A549 (cell line): ENCODE measurements at regions of chr11 and their contacts with region 1.

Region 1: DNA sequence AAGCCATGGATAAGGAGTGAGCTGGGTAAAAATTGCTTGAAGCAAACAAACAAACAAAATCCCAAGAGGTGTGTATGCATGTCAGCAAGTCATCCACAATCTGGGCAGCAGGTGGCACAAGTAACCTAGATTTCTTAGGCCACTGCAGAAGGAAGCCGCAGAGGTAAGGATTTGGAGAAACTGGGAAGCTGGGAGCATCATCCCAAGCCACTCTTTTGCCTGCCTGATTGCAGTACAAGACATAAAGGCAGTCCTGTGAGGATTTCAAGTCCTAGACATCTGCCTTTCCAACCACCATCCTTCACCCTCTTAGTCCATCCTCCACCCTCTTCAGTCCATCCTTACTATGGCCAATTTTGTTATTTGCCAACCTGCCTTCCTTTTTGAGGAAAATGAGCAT is 67.2 kb upstream of the BMAL1 start:
- DNase-seq: peak; percentile 72 to 88
- ATAC-seq: peak; percentile 85 to 90
- H3K4me3 ChIP-seq: no peak overlapping the region
- H3K27ac ChIP-seq: peak overlapping the region; percentile 6 to 64; a peak in 3 of 6 replicates
- H3K4me1 ChIP-seq: peaks cover 35% of the 10 kb centered on the region
- CTCF ChIP-seq: peak; percentile 95
- EP300 ChIP-seq: no peak
- POLR2A ChIP-seq: no peak
- RAD21 ChIP-seq: peak; percentile 99

Region 2: DNA sequence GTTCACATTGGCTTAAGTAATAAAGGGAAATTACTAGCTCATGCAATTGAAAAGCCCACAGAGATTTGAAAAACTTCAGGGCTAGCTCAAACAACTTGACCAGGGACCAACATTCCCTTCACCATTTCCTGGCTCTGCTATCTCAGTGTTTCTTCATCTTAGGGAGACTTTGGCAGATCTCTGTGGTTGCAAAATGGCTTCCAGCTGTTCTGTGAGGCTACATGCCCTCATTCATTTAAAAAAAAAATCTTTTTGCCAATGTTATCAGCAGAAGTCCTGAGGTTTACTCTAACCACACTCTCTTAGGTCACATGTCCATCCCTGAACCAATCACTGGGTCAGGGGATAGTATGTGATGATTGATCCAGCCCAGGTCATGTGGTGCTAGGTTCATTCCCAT is 215.2 kb before region 1 on chr11:
- CTCF ChIA-PET with region 1: no interaction called
- POLR2A ChIA-PET with region 1: no interaction called
- DNase-seq: no peak
- ATAC-seq: no peak
- H3K4me3 ChIP-seq: no peak overlapping the region
- H3K27ac ChIP-seq: no peak overlapping the region
- H3K4me1 ChIP-seq: no peaks in the 10 kb centered on the region
- CTCF ChIP-seq: no peak
- EP300 ChIP-seq: no peak
- POLR2A ChIP-seq: no peak
- RAD21 ChIP-seq: no peak

Region 3: GRCh38 chr11:13073119-13073981 is 137.1 kb before region 1 on chr11:
- CTCF ChIA-PET with region 1: no interaction called
- POLR2A ChIA-PET with region 1: no interaction called
- DNase-seq: peak; percentile 88 to 91
- ATAC-seq: peak; percentile 96 to 97
- H3K4me3 ChIP-seq: no peak overlapping the region
- H3K27ac ChIP-seq: peak overlapping the region; percentile 86 to 87
- H3K4me1 ChIP-seq: peaks cover 38% of the 10 kb centered on the region
- CTCF ChIP-seq: no peak
- EP300 ChIP-seq: peak; percentile 28 to 80; a peak in 2 of 5 replicates
- POLR2A ChIP-seq: no peak
- RAD21 ChIP-seq: peak in 1 of 2 experiments; percentile 30; a peak in 2 of 5 replicates

Region 4: DNA sequence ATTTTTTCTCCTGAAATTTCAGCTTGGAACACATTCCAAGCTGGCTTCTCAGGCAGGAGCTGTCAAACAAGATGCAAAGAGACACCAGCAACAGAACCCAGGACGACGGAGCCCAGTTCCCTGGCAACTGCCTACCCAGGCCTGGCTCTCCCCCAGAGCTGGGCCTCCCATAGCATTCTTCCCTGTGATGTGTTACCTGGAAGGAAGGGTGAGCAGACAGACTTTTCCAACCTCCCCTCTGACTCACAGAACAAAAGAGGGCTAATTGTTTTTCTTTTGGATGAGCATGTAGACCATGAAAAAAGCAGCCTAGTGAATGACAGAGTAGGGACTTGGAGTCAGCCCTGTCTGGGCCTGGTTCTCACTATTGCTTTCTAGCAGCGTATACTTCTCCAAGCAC is 11.9 kb after region 1 on chr11:
- CTCF ChIA-PET with region 1: interaction called, 44 read pairs
- POLR2A ChIA-PET with region 1: no interaction called
- DNase-seq: no peak
- ATAC-seq: peak in 1 of 2 experiments; percentile 37; a peak in 3 of 6 replicates
- H3K4me3 ChIP-seq: no peak overlapping the region
- H3K27ac ChIP-seq: peak overlapping the region in 1 of 2 experiments; percentile 63; a peak in 2 of 6 replicates
- H3K4me1 ChIP-seq: peaks cover 16% of the 10 kb centered on the region
- CTCF ChIP-seq: no peak
- EP300 ChIP-seq: no peak
- POLR2A ChIP-seq: no peak
- RAD21 ChIP-seq: no peak

Region 5: GRCh38 chr11:13249996-13250395 is 39.6 kb after region 1 on chr11:
- CTCF ChIA-PET with region 1: interaction called, 36 read pairs
- POLR2A ChIA-PET with region 1: no interaction called
- DNase-seq: peak in 1 of 2 experiments; percentile 27
- ATAC-seq: peak; percentile 75 to 82
- H3K4me3 ChIP-seq: no peak overlapping the region
- H3K27ac ChIP-seq: no peak overlapping the region
- H3K4me1 ChIP-seq: peaks cover 6% of the 10 kb centered on the region
- CTCF ChIP-seq: peak; percentile 52
- EP300 ChIP-seq: no peak
- POLR2A ChIP-seq: no peak
- RAD21 ChIP-seq: peak; percentile 66 to 70

Region 6: DNA sequence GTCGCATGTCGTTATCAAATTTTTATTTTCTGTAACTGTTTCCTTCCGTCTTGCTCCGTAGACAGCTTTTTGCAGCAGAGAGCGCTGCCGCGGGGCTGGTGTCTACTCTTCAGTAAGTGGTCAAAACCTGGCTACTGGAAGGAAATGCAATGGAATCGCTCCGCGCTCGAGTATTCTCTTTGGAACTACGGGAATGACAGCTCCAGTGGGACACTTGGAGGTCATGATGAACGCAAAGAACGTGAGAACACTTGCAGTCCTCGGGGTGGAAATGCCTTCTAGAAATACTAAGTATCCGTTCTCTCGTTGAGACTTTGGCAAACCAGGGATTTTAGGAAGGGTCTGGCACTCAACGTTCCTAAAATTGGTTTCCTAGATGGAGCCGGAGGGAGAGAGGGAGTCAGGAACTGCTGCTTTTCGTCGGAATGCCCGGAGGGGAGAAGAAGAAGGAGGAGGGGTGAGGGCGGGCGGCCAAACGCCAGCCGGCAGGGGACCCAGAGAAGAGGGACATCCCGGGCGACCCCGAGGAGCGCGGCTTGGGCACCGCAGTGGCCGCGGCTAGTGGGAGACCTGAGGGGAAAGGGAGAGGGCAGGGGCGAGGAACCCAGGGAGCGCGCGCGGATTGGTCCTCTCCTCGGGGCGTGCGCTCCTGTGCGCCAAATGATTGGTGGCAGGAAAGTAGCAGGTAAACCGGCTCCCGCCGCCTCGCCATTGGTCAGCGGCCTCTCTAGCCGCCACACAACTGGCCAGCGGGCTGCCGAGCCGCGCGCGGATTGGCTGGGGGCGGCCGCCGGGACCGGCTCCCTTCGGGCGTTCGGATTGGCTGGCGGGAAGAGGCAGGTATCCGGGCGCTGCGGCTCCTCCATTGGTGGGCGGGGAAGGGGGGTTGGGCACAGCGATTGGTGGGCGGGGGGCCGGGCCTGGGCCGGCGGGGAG is 66.7 kb after region 1 on chr11:
- CTCF ChIA-PET with region 1: interaction called, 13 read pairs
- POLR2A ChIA-PET with region 1: interaction called, 12 read pairs
- DNase-seq: peak; percentile 98 to 99
- ATAC-seq: peak; percentile 93 to 99
- H3K4me3 ChIP-seq: peak overlapping the region; percentile 96
- H3K27ac ChIP-seq: peak overlapping the region; percentile 83 to 93
- H3K4me1 ChIP-seq: peaks cover 24% of the 10 kb centered on the region; the same call in 2 of the 3 replicates
- CTCF ChIP-seq: no peak
- EP300 ChIP-seq: no peak
- POLR2A ChIP-seq: peak; percentile 70
- RAD21 ChIP-seq: no peak

Region 7: GRCh38 chr11:13318498-13319295 is 108.3 kb after region 1 on chr11:
- CTCF ChIA-PET with region 1: interaction called, 11 read pairs
- POLR2A ChIA-PET with region 1: no interaction called
- DNase-seq: no peak
- ATAC-seq: no peak
- H3K4me3 ChIP-seq: no peak overlapping the region
- H3K27ac ChIP-seq: no peak overlapping the region
- H3K4me1 ChIP-seq: peaks cover 42% of the 10 kb centered on the region
- CTCF ChIP-seq: no peak
- EP300 ChIP-seq: no peak
- POLR2A ChIP-seq: no peak
- RAD21 ChIP-seq: no peak

Region 8: DNA sequence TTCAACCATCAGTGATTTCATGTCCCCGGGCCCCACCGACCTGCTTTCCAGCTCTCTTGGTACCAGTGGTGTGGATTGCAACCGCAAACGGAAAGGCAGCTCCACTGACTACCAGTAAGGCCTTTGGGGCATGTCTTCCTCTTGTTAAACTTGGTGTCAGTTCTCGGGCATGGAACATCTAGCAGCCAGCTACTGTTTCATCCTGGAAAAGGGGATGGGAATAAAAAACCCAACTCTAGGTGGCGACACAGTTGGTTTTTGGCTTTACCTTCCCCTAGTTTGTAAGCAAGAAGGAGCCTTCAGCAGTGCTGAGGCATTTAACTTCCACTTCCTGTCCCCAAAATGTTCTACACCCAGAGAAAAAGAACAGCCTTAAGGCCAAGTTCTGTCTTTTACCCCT is 143.9 kb after region 1 on chr11:
- CTCF ChIA-PET with region 1: interaction called, 56 read pairs
- POLR2A ChIA-PET with region 1: no interaction called
- DNase-seq: peak in 1 of 2 experiments; percentile 31
- ATAC-seq: peak in 1 of 2 experiments; percentile 70; a peak in 4 of 6 replicates
- H3K4me3 ChIP-seq: no peak overlapping the region
- H3K27ac ChIP-seq: no peak overlapping the region
- H3K4me1 ChIP-seq: no peaks in the 10 kb centered on the region
- CTCF ChIP-seq: peak; percentile 21; the same call in 2 of the 3 replicates
- EP300 ChIP-seq: no peak
- POLR2A ChIP-seq: no peak
- RAD21 ChIP-seq: peak in 1 of 2 experiments; percentile 37; a peak in 1 of 5 replicates

Region 9: GRCh38 chr11:13391217-13391616 is 180.8 kb after region 1 on chr11:
- CTCF ChIA-PET with region 1: interaction called, 123 read pairs
- POLR2A ChIA-PET with region 1: no interaction called
- DNase-seq: no peak
- ATAC-seq: no peak
- H3K4me3 ChIP-seq: no peak overlapping the region
- H3K27ac ChIP-seq: no peak overlapping the region
- H3K4me1 ChIP-seq: no peaks in the 10 kb centered on the region
- CTCF ChIP-seq: no peak
- EP300 ChIP-seq: no peak
- POLR2A ChIP-seq: no peak
- RAD21 ChIP-seq: no peak